ENCODE measurements at regions of chr16 and their contacts with region 1.

Region 1: DNA sequence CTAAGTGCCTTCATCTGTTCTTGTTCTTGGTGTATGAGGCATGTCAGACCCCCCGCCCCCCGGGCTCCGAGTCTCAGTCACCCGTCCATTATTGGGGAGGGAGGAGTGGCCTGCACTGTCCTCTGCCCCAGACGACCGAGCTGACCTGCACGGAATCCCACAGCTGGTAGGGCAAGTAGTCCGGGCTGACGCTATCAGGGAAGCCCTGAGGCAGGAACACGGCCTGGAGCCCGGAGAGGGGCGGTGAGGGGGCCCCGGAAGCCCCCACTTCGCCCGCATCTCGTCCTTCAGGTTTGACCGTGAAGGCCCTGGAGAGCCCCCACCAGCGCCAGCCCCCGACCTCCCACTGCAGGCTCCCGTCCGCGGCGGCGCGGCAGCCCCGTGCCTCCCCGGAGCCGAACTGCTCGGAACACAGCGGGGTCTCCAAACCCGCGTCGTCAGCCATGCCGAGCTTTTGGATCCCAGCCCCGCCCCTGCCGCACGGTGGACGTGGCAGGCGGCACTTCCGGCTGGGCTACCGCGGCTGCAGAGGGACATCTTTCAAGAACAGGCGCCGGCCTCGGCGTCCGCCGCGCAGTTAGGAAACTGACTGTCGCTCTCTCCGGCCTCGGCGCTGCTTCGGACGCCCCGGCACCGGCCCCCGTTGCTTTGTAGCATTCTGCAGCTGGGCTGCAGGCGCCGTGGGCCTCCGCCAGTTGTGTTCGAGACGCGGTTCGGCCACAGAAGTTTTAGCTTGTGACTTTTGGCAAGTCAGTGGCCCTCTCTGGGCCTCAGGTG is at the start of gene RUSF1:
- DNase-seq: peak; percentile 91
- H3K4me3 Mint-ChIP-seq: peak within 1 kb of the TSS; percentile 92
- H3K27ac Mint-ChIP-seq: peak within 1 kb of the TSS; percentile 97
- H3K4me1 Mint-ChIP-seq: peaks cover 42% of the 10 kb centered on the region
- H3K27me3 Mint-ChIP-seq: no peaks in the 10 kb centered on the region
- total RNA-seq, gene RUSF1: 24.0 to 26.0 TPM

Region 2: GRCh38 chr16:31476303-31477219 is 31.6 kb before region 1 on chr16:
- CTCF ChIA-PET with region 1: no interaction called
- intact Hi-C with region 1: loop called (anchors 2 kb)
- DNase-seq: peak; percentile 93
- H3K4me3 Mint-ChIP-seq: peak overlapping the region; percentile 78
- H3K27ac Mint-ChIP-seq: no peak overlapping the region
- H3K4me1 Mint-ChIP-seq: peaks cover 16% of the 10 kb centered on the region
- H3K27me3 Mint-ChIP-seq: peaks cover 18% of the 10 kb centered on the region

Region 3: DNA sequence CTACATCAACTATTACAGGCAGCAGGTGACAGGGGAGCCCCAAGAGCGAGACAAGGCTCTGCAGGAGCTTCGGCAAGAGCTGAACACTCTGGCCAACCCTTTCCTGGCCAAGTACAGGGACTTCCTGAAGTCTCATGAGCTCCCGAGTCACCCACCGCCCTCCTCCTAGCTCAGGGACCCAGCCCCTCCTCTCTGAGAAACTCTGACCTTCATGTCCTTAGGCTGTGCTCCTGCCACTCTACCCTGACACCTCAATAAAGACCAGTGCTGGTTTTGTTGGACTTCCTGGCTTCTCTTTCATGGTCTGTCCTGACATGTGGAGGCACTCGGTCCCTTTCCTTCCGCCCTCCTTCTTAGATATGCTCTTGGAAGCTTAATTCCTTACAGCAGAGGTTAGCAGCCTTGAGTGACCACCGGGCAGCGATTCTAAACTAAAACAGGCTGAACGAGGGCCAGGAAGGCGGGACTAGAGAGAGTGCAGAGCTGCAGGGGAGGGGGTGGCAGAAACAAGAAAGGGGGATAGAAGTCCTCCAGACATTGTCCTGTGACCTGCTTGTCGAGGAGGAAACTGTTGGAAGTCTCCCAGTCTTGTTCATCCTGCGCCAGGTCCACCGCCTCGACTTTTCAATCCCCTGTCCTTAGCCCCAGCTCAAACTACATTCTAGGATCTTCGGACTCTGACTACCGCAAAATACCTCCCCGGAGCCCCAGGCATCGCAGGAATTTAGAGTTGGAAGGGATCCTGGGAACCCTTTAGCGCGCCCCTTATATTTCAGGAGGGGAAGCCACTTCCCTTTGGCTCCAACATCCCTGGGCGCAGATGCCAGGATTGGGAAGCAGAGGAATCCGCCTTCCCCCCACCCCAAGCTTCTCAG is 20.6 kb after region 1 on chr16:
- CTCF ChIA-PET with region 1: interaction called, 3 read pairs
- intact Hi-C with region 1: loop called (anchors 2 kb)
- DNase-seq: no peak
- H3K4me3 Mint-ChIP-seq: peak overlapping the region; percentile 22
- H3K27ac Mint-ChIP-seq: no peak overlapping the region
- H3K4me1 Mint-ChIP-seq: peaks cover 21% of the 10 kb centered on the region
- H3K27me3 Mint-ChIP-seq: peaks cover 8% of the 10 kb centered on the region